PC-3 (cell line): ENCODE measurements at regions of chr7 and their contacts with region 1.

Region 1: DNA sequence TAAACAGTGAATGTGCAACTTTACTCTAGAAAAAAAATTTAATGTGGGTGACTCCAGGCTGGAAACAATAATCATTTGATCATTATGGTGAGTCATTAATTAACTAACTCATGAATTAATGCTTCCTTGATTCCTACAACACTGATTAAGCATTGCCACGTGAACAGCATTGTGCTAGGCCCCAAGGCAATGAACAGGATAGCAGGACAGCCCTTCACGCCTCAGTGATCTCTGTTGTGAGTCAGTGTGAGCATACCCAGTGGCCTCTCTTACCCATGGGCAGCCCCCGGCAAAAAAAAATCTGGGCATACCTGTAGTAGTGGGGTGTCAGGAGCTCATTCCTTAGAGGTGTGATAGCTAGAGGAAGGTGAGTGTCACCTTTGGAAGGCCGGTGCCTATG is 76.0 kb downstream of the DENND2A start:
- DNase-seq: peak; percentile 66
- ATAC-seq: peak; percentile 58
- H3K4me3 ChIP-seq: no peak overlapping the region
- H3K27ac ChIP-seq: peak overlapping the region; percentile 28
- H3K4me1 ChIP-seq: peaks cover 36% of the 10 kb centered on the region
- H3K27me3 ChIP-seq: no peaks in the 10 kb centered on the region
- CTCF ChIP-seq: no peak

Region 2: GRCh38 chr7:140541513-140542227 is 23.0 kb before region 1 on chr7:
- CTCF ChIA-PET with region 1: no interaction called
- POLR2A ChIA-PET with region 1: no interaction called
- intact Hi-C with region 1: loop called (anchors 2 kb)
- DNase-seq: peak; percentile 87
- ATAC-seq: peak; percentile 96
- H3K4me3 ChIP-seq: peak overlapping the region; percentile 64
- H3K27ac ChIP-seq: peak overlapping the region; percentile 96
- H3K4me1 ChIP-seq: peaks cover 23% of the 10 kb centered on the region
- H3K27me3 ChIP-seq: no peaks in the 10 kb centered on the region
- CTCF ChIP-seq: no peak

Region 3: DNA sequence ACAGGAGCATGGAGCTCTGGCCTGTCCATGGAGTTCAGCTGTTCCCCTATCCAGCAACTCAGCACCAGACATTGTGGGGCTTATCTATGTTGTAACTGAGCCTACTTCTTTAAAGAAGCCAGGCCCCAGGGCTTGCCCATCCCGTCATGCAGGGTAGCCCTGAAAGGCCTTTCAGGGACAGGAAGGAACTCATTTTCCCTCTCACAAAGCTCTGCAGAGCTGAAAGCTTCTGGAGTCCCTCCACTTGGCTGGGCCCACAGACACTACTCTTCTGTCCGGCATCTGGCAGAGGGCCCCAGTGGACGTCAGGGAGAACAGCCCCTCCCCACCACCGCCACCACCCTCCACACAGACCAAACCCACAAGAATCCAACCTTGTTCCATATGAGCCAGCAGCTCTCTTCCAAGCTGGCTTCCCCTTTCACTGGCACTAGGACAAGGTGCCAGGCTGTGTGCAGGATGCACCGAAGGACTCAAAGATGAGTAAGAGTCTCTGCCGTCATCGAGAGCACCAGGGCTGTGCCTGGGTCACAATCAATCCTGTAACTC is 42.9 kb after region 1 on chr7:
- CTCF ChIA-PET with region 1: no interaction called
- POLR2A ChIA-PET with region 1: no interaction called
- intact Hi-C with region 1: loop called (anchors 5 kb)
- DNase-seq: peak; percentile 80
- ATAC-seq: peak; percentile 52
- H3K4me3 ChIP-seq: no peak overlapping the region
- H3K27ac ChIP-seq: peak overlapping the region; percentile 96
- H3K4me1 ChIP-seq: peaks cover 69% of the 10 kb centered on the region
- H3K27me3 ChIP-seq: no peaks in the 10 kb centered on the region
- CTCF ChIP-seq: no peak

Region 4: GRCh38 chr7:140646931-140647647 is 82.4 kb after region 1 on chr7:
- CTCF ChIA-PET with region 1: interaction called, 10 read pairs
- POLR2A ChIA-PET with region 1: interaction called, 3 read pairs
- intact Hi-C with region 1: no loop called
- DNase-seq: no peak
- ATAC-seq: peak; percentile 53; the same call in 1 of the 2 replicates
- H3K4me3 ChIP-seq: no peak overlapping the region
- H3K27ac ChIP-seq: no peak overlapping the region
- H3K4me1 ChIP-seq: peaks cover 17% of the 10 kb centered on the region
- H3K27me3 ChIP-seq: no peaks in the 10 kb centered on the region
- CTCF ChIP-seq: peak; percentile 62

Region 5: GRCh38 chr7:141057788-141058187 is 493.1 kb after region 1 on chr7:
- CTCF ChIA-PET with region 1: no interaction called
- POLR2A ChIA-PET with region 1: no interaction called
- intact Hi-C with region 1: no loop called
- DNase-seq: no peak
- ATAC-seq: no peak
- H3K4me3 ChIP-seq: no peak overlapping the region
- H3K27ac ChIP-seq: no peak overlapping the region
- H3K4me1 ChIP-seq: no peaks in the 10 kb centered on the region
- H3K27me3 ChIP-seq: peaks cover 40% of the 10 kb centered on the region
- CTCF ChIP-seq: no peak